GM12878 (cell line): ENCODE measurements at regions of chr2 and their contacts with region 1.

Region 1: GRCh38 chr2:64533882-64534281 is 9.8 kb downstream of the AFTPH start:
- DNase-seq: no peak
- ATAC-seq: peak; percentile 13
- H3K4me3 ChIP-seq: peak overlapping the region; percentile 38; the same call in 1 of the 2 replicates
- H3K27ac ChIP-seq: peak overlapping the region; percentile 17; the same call in 1 of the 2 replicates
- H3K4me1 ChIP-seq: peaks cover 35% of the 10 kb centered on the region
- H3K27me3 ChIP-seq: no peaks in the 10 kb centered on the region
- CTCF ChIP-seq: no peak
- EP300 ChIP-seq: no peak
- POLR2A ChIP-seq: no peak
- RAD21 ChIP-seq: no peak

Region 2: DNA sequence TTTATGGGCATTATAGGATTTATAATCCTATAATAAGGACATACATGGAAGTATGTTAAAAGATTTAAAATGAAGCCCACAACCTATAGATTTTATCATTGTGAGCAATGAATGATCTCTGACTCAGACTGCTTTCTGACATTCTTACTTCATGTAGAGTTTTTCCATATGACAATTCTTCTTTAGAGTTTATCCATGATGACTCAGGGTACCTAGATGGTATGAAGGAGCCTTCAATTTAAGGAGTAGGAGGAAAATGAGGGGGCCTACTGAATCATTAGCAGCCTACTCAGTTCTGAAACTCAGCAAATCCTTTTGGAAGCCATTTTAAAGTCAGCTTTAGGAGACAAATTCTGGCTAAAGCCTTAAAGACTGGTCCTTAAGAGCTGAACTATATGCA is 400.1 kb before region 1 on chr2:
- CTCF ChIA-PET with region 1: no interaction called
- POLR2A ChIA-PET with region 1: no interaction called
- RAD21 ChIA-PET with region 1: no interaction called
- SMC1A ChIA-PET with region 1: no interaction called
- in situ Hi-C with region 1: no loop called
- intact Hi-C with region 1: no loop called
- DNase-seq: no peak
- ATAC-seq: no peak
- H3K4me3 ChIP-seq: no peak overlapping the region
- H3K27ac ChIP-seq: no peak overlapping the region; the same call in 1 of the 2 replicates
- H3K4me1 ChIP-seq: peaks cover 46% of the 10 kb centered on the region
- H3K27me3 ChIP-seq: no peaks in the 10 kb centered on the region
- CTCF ChIP-seq: no peak
- EP300 ChIP-seq: no peak
- POLR2A ChIP-seq: no peak
- RAD21 ChIP-seq: no peak

Region 3: GRCh38 chr2:64179582-64180321 is 354.1 kb before region 1 on chr2:
- CTCF ChIA-PET with region 1: no interaction called
- POLR2A ChIA-PET with region 1: no interaction called
- RAD21 ChIA-PET with region 1: no interaction called
- SMC1A ChIA-PET with region 1: no interaction called
- in situ Hi-C with region 1: no loop called
- intact Hi-C with region 1: no loop called
- DNase-seq: peak; percentile 70
- ATAC-seq: peak; percentile 98
- H3K4me3 ChIP-seq: no peak overlapping the region
- H3K27ac ChIP-seq: peak overlapping the region; percentile 57
- H3K4me1 ChIP-seq: peaks cover 12% of the 10 kb centered on the region; the same call in 1 of the 2 replicates
- H3K27me3 ChIP-seq: no peaks in the 10 kb centered on the region
- CTCF ChIP-seq: no peak
- EP300 ChIP-seq: peak; percentile 64 to 69; a peak in 2 of 4 replicates
- POLR2A ChIP-seq: no peak
- RAD21 ChIP-seq: no peak

Region 4: DNA sequence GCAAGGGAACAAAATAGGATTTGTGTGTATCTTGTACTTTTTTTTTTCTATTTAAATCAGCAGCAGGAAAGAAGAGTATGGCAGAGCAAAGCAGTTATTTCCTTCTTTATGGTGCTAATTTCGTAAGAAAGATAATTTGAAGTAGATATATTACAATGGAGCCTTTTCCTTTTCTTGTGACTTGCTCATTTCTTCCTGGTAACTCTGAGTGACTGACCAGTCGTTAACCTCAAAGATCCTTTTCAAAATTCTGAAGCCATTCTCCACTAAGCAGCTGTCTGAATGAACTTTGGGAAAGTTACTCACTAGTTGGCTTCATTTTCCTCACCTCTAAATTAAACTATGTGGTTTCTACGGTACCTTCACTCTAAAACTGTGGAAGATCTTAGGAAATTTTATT is 14.9 kb after region 1 on chr2:
- CTCF ChIA-PET with region 1: interaction called, 10 read pairs
- POLR2A ChIA-PET with region 1: interaction called, 5 read pairs
- RAD21 ChIA-PET with region 1: interaction called, 5 read pairs
- SMC1A ChIA-PET with region 1: interaction called, 15 read pairs
- in situ Hi-C with region 1: no loop called
- intact Hi-C with region 1: no loop called
- DNase-seq: no peak
- ATAC-seq: no peak
- H3K4me3 ChIP-seq: no peak overlapping the region
- H3K27ac ChIP-seq: no peak overlapping the region
- H3K4me1 ChIP-seq: no peaks in the 10 kb centered on the region
- H3K27me3 ChIP-seq: no peaks in the 10 kb centered on the region
- CTCF ChIP-seq: no peak
- EP300 ChIP-seq: no peak
- POLR2A ChIP-seq: no peak
- RAD21 ChIP-seq: no peak